ENCODE measurements at regions of chr12 and their contacts with region 1.

Region 1: DNA sequence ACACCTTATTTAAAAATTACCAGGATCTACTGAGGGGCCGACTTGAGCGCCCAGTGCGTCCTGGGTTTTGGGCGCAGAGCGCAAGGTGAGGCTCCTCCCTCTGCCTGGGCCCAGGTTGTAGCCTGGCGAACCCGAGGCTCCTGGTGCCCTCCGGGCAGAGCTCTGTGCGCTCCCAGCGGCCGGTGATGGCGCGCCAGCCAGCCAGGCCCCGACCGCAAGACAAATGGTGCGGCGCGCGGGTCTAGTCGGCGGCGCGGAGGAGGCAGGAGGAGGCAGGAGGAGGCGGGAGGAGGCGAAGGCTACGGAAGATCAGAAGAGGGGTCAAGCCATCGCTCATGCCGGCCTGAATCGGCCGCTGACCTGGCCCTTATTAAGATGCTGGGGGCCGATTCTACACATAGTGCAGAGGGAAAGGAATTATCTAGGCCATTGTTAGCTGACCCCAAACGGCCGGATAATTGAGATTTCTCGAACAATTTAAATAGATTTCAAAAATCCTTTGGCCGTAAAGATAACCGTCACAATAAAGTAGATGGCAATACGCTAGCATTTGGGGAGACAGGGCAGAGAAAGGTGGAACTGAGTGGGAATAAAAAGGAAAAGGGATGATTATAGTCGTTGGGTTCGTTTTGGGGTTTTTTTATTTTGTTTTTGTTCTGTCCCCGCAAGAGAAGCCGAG is 2.8 kb downstream of the TBX5 start:
- DNase-seq: no peak
- H3K4me3 Mint-ChIP-seq: no peak overlapping the region
- H3K27ac Mint-ChIP-seq: no peak overlapping the region
- H3K4me1 Mint-ChIP-seq: peaks cover 7% of the 10 kb centered on the region
- H3K27me3 Mint-ChIP-seq: peaks cover 85% of the 10 kb centered on the region

Region 2: GRCh38 chr12:113467502-113468364 is 935.4 kb before region 1 on chr12:
- CTCF ChIA-PET with region 1: no interaction called
- intact Hi-C with region 1: loop called (anchors 5 kb)
- DNase-seq: no peak
- H3K4me3 Mint-ChIP-seq: no peak overlapping the region
- H3K27ac Mint-ChIP-seq: no peak overlapping the region
- H3K4me1 Mint-ChIP-seq: peaks cover 26% of the 10 kb centered on the region
- H3K27me3 Mint-ChIP-seq: peaks cover 75% of the 10 kb centered on the region

Region 3: DNA sequence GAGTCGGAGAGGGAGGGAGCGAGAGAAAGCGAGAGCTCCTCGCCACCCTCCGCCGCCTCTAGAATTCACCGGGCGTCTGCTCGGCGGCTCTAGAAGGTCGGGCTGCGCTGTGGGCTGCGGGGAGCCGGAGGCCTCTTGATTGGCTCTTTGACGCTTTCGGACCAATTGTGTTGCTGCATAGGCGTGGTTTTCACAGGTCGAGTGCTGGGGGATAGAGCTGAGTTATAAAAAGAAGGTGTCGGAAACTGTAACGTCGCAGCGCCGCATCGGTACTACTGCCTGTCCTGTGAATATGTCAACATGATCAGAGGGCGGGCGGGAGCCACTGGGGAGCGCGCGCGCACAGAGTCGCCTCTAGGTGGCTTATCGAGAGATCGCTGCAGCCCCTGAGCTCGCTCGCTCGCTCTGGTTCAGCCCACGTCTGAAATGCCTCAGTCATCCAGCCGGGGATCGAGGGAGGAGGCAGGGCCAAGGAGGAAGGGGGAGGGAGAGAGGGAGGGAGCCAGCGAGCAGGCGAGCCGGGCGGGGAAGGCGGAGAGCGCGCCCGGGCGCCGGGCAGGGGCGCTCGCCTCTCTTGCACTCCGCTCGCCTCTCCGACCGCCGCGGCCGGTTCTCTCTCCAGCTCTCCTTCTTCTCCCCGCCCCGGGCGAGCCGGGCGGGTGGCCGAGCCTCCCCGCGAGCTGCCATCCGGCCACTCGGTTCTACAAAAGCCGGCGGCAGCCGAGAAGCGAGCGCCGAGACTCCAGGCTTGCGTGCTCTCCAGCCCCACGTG is 281.1 kb after region 1 on chr12 and contains the start of gene TBX3:
- CTCF ChIA-PET with region 1: no interaction called
- intact Hi-C with region 1: loop called (anchors 5 kb)
- DNase-seq: peak; percentile 79
- H3K4me3 Mint-ChIP-seq: peak within 1 kb of the TSS; percentile 73
- H3K27ac Mint-ChIP-seq: no peak within 1 kb of the TSS
- H3K4me1 Mint-ChIP-seq: peaks cover 45% of the 10 kb centered on the region
- H3K27me3 Mint-ChIP-seq: peaks cover 91% of the 10 kb centered on the region
- total RNA-seq, gene TBX3: not detected

Measured in activated naive CD4-positive, alpha-beta T cell treated with anti-CD3 and anti-CD28 coated beads for 36 hours (primary cell).